ENCODE measurements at regions of chr4 and their contacts with region 1.

Region 1: DNA sequence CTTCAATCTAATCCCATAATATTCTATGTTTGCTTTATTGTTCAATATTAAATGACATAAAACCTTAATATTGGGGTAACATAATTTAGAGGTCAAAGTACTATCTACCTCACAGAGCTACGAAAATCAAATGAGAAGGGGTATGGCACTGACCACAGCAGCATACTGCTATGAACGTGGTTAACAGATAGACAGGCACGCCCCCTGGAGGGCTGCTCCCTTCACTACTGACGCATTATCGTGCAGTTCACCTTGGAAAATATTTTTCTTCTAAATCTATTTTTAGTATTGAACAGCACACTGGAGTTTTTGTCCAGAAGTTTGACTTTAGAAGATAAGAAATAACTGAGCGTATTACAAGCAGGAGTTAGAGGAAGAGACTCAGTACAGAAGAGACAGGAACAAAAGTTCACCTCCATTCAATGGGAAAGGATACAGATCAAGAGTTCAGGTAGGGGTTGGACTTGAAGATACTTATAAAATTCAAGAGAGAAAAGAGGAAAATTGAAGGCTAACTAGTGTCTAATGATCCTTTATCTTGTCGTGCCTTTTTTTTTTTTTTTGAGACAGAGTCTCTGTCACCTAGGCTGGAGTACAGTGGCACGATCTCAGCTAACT is 22.7 kb downstream of the MAP9 start:
- DNase-seq: peak; percentile 87
- ATAC-seq: peak; percentile 82

Region 2: DNA sequence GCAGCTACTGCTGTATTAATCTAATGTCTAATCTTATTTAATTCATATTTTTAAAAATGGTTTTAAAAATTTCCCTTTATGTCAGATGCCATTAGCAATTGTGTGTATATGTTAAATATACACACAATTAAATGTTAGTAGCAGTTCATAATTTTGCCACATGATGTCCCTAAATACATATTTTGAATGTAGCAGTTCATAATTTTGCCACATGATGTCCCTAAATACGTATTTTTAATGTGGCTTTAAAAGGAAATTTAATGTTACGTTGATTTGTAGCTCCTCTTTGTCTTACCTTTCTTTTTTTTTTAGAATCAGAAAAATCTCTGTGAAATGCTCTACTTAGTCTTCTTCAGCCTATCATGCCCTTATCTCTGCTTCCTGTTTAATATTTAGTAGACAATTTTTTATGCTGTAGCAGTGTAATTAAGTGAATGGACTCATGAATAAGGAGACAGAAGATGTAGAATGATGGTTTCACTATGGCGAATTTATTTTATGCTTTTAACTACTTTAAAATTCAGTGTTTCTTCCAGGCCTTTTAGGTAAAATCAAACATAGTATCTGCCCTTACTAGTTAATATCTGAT is 546.9 kb before region 1 on chr4:
- intact Hi-C with region 1: loop called (anchors 5 kb)
- DNase-seq: no peak
- ATAC-seq: no peak

Region 3: DNA sequence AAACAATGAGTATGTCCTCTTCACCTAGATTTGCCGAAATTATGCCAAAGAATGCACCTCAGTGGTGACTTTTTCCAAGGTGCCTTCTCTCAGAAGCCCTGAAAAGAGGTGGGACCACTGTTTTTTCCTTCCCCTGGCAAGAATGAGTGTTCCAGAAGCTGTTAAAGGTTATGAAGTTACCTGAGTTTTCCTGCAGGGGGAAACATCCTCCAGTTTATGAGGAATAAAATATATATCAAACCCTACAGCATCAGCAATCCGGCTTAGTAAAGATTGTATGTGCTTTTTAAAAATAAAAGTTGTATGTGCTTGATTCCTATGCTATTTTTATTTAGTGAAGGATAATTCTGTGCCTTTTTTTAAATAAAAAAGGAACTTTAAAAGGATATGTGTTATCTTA is 499.7 kb before region 1 on chr4:
- intact Hi-C with region 1: loop called (anchors 2 kb)
- DNase-seq: no peak
- ATAC-seq: no peak

Region 4: GRCh38 chr4:154982187-154983047 is 371.6 kb before region 1 on chr4:
- intact Hi-C with region 1: loop called (anchors 5 kb)
- DNase-seq: no peak
- ATAC-seq: peak; percentile 59

Region 5: GRCh38 chr4:155487210-155487609 is 133.2 kb after region 1 on chr4:
- intact Hi-C with region 1: no loop called
- DNase-seq: no peak
- ATAC-seq: no peak

Region 6: GRCh38 chr4:155809835-155810234 is 455.8 kb after region 1 on chr4:
- intact Hi-C with region 1: no loop called
- DNase-seq: no peak
- ATAC-seq: peak; percentile 76

Measured in Right ventricle myocardium inferior (tissue), 1 donor.